ENCODE measurements at regions of chr14 and their contacts with region 1.

Region 1: GRCh38 chr14:78022059-78022458 is 148.1 kb upstream of the NRXN3 start:
- DNase-seq: peak; percentile 66 to 73
- H3K4me3 ChIP-seq: no peak overlapping the region
- H3K27ac ChIP-seq: no peak overlapping the region
- H3K4me1 ChIP-seq: no peaks in the 10 kb centered on the region
- H3K27me3 ChIP-seq: peaks cover 53% of the 10 kb centered on the region
- CTCF ChIP-seq: peak; percentile 91

Region 2: GRCh38 chr14:77654001-77654441 is 368.0 kb before region 1 on chr14:
- CTCF ChIA-PET with region 1: interaction called, 8 read pairs
- POLR2A ChIA-PET with region 1: no interaction called
- intact Hi-C with region 1: loop called (anchors 10 kb)
- DNase-seq: no peak
- H3K4me3 ChIP-seq: no peak overlapping the region
- H3K27ac ChIP-seq: no peak overlapping the region
- H3K4me1 ChIP-seq: no peaks in the 10 kb centered on the region
- H3K27me3 ChIP-seq: no peaks in the 10 kb centered on the region
- CTCF ChIP-seq: no peak

Region 3: DNA sequence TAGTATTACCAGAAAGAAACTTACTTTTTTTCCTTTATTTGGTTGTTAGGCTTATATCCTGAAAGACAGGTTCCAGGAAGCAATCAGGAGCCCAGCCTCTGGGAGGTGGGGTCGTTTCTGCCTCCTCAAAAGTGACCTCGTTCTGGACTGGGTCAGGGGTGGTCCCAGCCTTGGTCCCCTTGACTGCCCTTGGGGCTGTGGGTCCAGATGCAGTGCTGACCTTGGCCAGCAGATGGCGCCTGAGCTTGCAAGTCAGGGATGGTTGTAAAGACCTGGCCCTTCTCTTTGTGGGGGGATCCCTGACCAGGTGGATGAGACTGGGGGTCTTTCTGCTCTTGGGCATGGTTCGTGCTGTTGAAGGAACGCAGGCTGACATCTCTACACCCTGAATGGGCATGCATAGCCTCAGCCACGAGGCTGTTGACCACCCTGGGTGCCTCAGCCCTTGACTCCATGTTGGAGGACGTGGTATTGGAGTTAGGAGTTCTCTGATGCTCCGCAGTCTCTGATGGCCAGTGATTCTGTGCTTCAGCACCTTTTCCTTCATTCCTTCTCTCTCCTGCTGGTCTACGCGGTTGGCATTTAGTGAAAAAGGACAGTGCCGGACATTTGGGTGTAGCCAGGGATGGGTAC is 159.8 kb before region 1 on chr14:
- CTCF ChIA-PET with region 1: no interaction called
- POLR2A ChIA-PET with region 1: no interaction called
- intact Hi-C with region 1: loop called (anchors 2 kb)
- DNase-seq: peak; percentile 58 to 86
- H3K4me3 ChIP-seq: no peak overlapping the region
- H3K27ac ChIP-seq: no peak overlapping the region
- H3K4me1 ChIP-seq: no peaks in the 10 kb centered on the region
- H3K27me3 ChIP-seq: no peaks in the 10 kb centered on the region
- CTCF ChIP-seq: peak; percentile 100

Region 4: GRCh38 chr14:78566026-78566858 is 544.2 kb after region 1 on chr14:
- CTCF ChIA-PET with region 1: no interaction called
- POLR2A ChIA-PET with region 1: no interaction called
- intact Hi-C with region 1: loop called (anchors 2 kb)
- DNase-seq: peak in 1 of 2 experiments; percentile 44
- H3K4me3 ChIP-seq: no peak overlapping the region; the same call in 1 of the 2 replicates
- H3K27ac ChIP-seq: no peak overlapping the region
- H3K4me1 ChIP-seq: no peaks in the 10 kb centered on the region
- H3K27me3 ChIP-seq: no peaks in the 10 kb centered on the region
- CTCF ChIP-seq: peak; percentile 67

Region 5: GRCh38 chr14:78598041-78598920 is 576.2 kb after region 1 on chr14:
- CTCF ChIA-PET with region 1: no interaction called
- POLR2A ChIA-PET with region 1: no interaction called
- intact Hi-C with region 1: loop called (anchors 1 kb)
- DNase-seq: peak in 1 of 2 experiments; percentile 29
- H3K4me3 ChIP-seq: no peak overlapping the region
- H3K27ac ChIP-seq: no peak overlapping the region
- H3K4me1 ChIP-seq: no peaks in the 10 kb centered on the region
- H3K27me3 ChIP-seq: no peaks in the 10 kb centered on the region
- CTCF ChIP-seq: peak; percentile 89

Region 6: DNA sequence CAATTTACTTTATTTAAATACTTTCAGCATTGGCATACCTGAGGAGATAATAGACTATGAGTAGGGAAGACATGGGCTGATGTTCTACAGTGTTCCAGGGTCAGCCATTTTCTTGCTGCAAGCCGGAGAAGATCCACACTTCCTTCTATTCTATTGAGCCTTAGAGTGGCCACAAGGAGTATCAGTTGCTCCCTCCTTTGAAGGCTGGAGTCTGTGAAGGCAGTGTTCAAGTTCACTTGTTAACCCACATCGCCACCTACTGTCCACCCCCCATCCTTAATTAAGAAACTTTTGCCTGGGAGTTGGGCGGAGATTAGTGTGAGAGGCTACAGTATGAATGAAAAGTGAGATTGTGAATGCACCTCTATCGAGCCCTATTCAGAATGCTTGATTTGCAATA is 814.7 kb after region 1 on chr14:
- CTCF ChIA-PET with region 1: no interaction called
- POLR2A ChIA-PET with region 1: no interaction called
- intact Hi-C with region 1: loop called (anchors 5 kb)
- DNase-seq: peak in 1 of 2 experiments; percentile 32
- H3K4me3 ChIP-seq: no peak overlapping the region
- H3K27ac ChIP-seq: no peak overlapping the region
- H3K4me1 ChIP-seq: no peaks in the 10 kb centered on the region
- H3K27me3 ChIP-seq: peaks cover 5% of the 10 kb centered on the region; the same call in 1 of the 2 replicates
- CTCF ChIP-seq: peak; percentile 60

Measured in PC-9 (cell line).